Mammary epithelial cell (primary cell): ENCODE measurements at regions of chr20 and their contacts with region 1.

Region 1: GRCh38 chr20:1764136-1765033 is 106.8 kb upstream of the SIRPG start:
- DNase-seq: peak; percentile 66
- H3K4me3 ChIP-seq: no peak overlapping the region
- H3K27ac ChIP-seq: no peak overlapping the region
- H3K4me1 ChIP-seq: peaks cover 18% of the 10 kb centered on the region
- H3K27me3 ChIP-seq: no peaks in the 10 kb centered on the region
- CTCF ChIP-seq: peak; percentile 86 to 91

Region 2: DNA sequence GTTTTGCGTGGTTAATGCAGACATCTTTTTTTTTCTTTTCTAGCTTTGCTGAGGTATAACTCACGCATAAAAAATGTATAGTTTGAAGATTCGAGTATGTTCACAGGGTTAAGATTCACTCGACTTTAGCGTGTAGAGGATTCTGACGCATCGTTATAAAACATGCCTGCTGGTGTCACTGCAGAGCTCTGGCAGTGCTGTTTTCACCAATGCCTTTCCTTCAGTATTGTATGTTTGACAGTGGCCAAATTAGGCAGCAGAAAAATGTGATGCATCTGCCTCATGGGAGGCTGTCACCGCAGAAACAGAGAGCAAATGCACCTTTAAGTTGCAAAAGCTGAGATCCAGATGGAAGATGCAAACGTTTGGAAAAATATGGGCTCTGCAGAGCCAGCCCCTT is 255.1 kb before region 1 on chr20:
- CTCF ChIA-PET with region 1: interaction called, 3 read pairs
- dilution Hi-C with region 1: no loop called
- in situ Hi-C with region 1: loop called in 1 of 2 experiments (anchors 25 kb)
- intact Hi-C with region 1: loop called (anchors 1 kb)
- DNase-seq: peak; percentile 54
- H3K4me3 ChIP-seq: no peak overlapping the region
- H3K27ac ChIP-seq: no peak overlapping the region
- H3K4me1 ChIP-seq: peaks cover 38% of the 10 kb centered on the region
- H3K27me3 ChIP-seq: no peaks in the 10 kb centered on the region
- CTCF ChIP-seq: peak; percentile 51 to 69

Region 3: DNA sequence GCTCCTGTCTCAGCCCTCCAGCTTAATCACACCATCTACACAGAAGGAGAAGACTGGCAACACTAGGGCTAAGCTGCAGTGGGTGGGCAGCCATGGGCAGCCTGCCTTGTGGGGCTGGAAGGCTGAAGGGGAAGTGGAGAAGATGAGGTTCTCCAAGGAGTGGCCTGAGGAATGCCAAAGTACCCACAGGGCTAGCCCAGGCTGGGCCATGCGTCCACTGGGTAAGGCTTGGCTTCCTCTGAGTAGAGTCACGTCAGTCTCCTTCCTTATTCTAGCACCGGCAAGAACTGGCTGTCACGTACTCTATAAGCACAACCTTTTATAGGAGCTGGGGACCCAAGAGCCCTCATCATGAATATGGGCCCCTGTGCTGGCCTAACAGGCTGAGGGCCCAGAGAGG is 20.2 kb after region 1 on chr20:
- CTCF ChIA-PET with region 1: no interaction called
- dilution Hi-C with region 1: no loop called
- in situ Hi-C with region 1: no loop called
- intact Hi-C with region 1: no loop called
- DNase-seq: no peak
- H3K4me3 ChIP-seq: no peak overlapping the region
- H3K27ac ChIP-seq: no peak overlapping the region
- H3K4me1 ChIP-seq: peaks cover 5% of the 10 kb centered on the region
- H3K27me3 ChIP-seq: no peaks in the 10 kb centered on the region
- CTCF ChIP-seq: no peak

Region 4: GRCh38 chr20:1965520-1966351 is 201.4 kb after region 1 on chr20:
- CTCF ChIA-PET with region 1: no interaction called
- dilution Hi-C with region 1: no loop called
- in situ Hi-C with region 1: no loop called
- intact Hi-C with region 1: loop called (anchors 2 kb)
- DNase-seq: peak; percentile 37
- H3K4me3 ChIP-seq: no peak overlapping the region
- H3K27ac ChIP-seq: no peak overlapping the region
- H3K4me1 ChIP-seq: peaks cover 3% of the 10 kb centered on the region
- H3K27me3 ChIP-seq: no peaks in the 10 kb centered on the region
- CTCF ChIP-seq: peak; percentile 82 to 94

Region 5: GRCh38 chr20:2172305-2173175 is 408.2 kb after region 1 on chr20:
- CTCF ChIA-PET with region 1: no interaction called
- dilution Hi-C with region 1: no loop called
- in situ Hi-C with region 1: no loop called
- intact Hi-C with region 1: loop called (anchors 5 kb)
- DNase-seq: peak; percentile 23
- H3K4me3 ChIP-seq: no peak overlapping the region
- H3K27ac ChIP-seq: no peak overlapping the region
- H3K4me1 ChIP-seq: no peaks in the 10 kb centered on the region
- H3K27me3 ChIP-seq: no peaks in the 10 kb centered on the region
- CTCF ChIP-seq: peak; percentile 85 to 94